Mammary epithelial cell (primary cell): ENCODE measurements at regions of chr12 and their contacts with region 1.

Region 1: DNA sequence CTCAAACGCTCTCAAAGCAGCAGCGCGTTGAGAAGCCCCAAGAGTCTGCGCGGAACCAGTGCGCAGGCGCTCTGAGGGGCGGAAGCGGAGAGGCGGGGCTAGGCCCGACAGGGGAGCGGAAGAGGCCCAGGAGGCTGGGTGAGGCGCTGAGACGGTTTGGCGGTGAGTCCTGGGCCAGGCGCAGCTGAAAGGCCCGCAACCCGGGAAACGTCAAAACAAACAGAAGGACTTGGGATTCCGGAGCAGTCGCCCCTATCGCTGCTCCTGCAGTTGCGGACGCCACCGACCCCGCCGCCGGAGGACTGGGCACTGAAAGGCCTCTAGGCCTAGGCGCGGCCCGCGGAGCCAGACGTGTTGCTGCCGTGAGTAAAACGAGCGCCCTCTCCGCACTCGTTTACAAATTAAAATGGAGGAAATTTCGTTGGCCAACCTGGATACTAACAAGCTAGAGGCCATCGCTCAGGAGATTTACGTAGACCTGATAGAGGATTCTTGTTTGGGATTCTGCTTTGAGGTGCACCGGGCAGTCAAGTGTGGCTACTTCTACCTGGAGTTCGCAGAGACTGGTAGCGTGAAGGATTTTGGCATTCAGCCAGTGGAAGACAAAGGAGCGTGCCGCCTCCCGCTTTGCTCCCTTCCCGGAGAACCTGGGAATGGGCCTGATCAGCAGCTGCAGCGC is at the start of gene ATXN7L3B:
- DNase-seq: peak; percentile 94
- H3K4me3 ChIP-seq: peak within 1 kb of the TSS; percentile 67 to 78 (median 69)
- H3K27ac ChIP-seq: peak within 1 kb of the TSS; percentile 97
- H3K4me1 ChIP-seq: peaks cover 24% of the 10 kb centered on the region
- H3K27me3 ChIP-seq: no peaks in the 10 kb centered on the region
- CTCF ChIP-seq: peak in 1 of 2 donors; percentile 8
- total RNA-seq, gene ATXN7L3B: 22.0 to 22.2 TPM

Region 2: DNA sequence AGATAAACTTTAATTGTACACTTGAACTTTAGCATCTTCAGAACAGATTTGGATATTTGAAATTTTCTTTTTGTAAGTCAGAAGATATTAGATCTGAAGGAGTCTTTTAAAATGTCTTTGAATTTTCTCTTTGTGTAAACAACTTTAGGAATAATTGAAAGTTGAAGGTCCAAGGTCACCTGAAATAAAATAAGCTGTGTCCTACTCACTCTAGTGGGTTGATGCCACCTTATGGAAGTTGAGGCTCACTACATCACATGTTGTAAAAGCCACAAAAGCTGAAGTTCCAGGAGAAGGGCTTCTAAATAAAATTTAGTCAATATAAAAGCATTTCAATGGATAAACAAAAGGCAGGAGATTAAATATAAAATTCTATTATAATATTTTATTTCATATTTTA is 122.2 kb before region 1 on chr12:
- CTCF ChIA-PET with region 1: interaction called, 3 read pairs
- dilution Hi-C with region 1: no loop called
- in situ Hi-C with region 1: no loop called
- intact Hi-C with region 1: loop called (anchors 2 kb)
- DNase-seq: peak; percentile 15
- H3K4me3 ChIP-seq: no peak overlapping the region
- H3K27ac ChIP-seq: no peak overlapping the region
- H3K4me1 ChIP-seq: no peaks in the 10 kb centered on the region
- H3K27me3 ChIP-seq: no peaks in the 10 kb centered on the region
- CTCF ChIP-seq: peak; percentile 45 to 64

Region 3: DNA sequence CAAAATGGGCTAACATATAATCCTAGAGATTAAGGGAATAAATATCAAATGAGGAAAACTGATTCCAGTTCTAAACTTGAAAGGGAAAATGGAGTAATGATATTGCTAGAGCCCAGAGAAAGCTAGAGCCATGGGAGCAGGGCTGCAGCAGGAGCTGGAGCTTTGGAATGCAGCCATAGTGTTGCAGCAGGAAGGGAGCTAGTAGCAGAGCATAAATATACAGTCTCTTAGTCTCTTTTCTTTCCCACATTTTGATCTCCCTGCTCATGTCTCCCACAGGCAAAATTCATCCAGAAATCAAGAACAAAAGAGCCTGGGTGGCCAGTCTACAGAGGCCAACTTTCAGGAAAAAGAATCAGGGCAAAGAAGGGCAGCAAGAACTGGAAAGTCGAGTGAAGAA is 253.5 kb after region 1 on chr12:
- CTCF ChIA-PET with region 1: no interaction called
- dilution Hi-C with region 1: no loop called
- in situ Hi-C with region 1: no loop called
- intact Hi-C with region 1: no loop called
- DNase-seq: no peak
- H3K4me3 ChIP-seq: no peak overlapping the region
- H3K27ac ChIP-seq: no peak overlapping the region
- H3K4me1 ChIP-seq: no peaks in the 10 kb centered on the region
- H3K27me3 ChIP-seq: no peaks in the 10 kb centered on the region
- CTCF ChIP-seq: no peak

Region 4: GRCh38 chr12:75635606-75636410 is 1098.0 kb after region 1 on chr12:
- CTCF ChIA-PET with region 1: no interaction called
- dilution Hi-C with region 1: no loop called
- in situ Hi-C with region 1: no loop called
- intact Hi-C with region 1: no loop called
- DNase-seq: peak; percentile 91
- H3K4me3 ChIP-seq: no peak overlapping the region
- H3K27ac ChIP-seq: peak overlapping the region; percentile 27
- H3K4me1 ChIP-seq: peaks cover 42% of the 10 kb centered on the region
- H3K27me3 ChIP-seq: no peaks in the 10 kb centered on the region
- CTCF ChIP-seq: no peak